Left lung (tissue), 14 donors: ENCODE measurements at regions of chr15 and their contacts with region 1.

Region 1: GRCh38 chr15:26891448-26892181 is 24.8 kb downstream of the GABRA5 start:
- DNase-seq: peak in 3 of 4 donors; percentile 53 to 90 (median 87)
- ATAC-seq: peak; percentile 87
- H3K4me3 ChIP-seq: no peak overlapping the region
- H3K27ac ChIP-seq: no peak overlapping the region
- H3K4me1 ChIP-seq: peaks cover 0 to 4% of the 10 kb centered on the region in 2 donors
- H3K27me3 ChIP-seq: peaks cover 0 to 39% of the 10 kb centered on the region in 2 donors
- CTCF ChIP-seq: peak; percentile 41 to 54

Region 2: GRCh38 chr15:26781816-26782215 is 109.8 kb before region 1 on chr15:
- intact Hi-C with region 1: no loop called
- DNase-seq: peak in 1 of 4 donors; percentile 51
- ATAC-seq: no peak
- H3K4me3 ChIP-seq: no peak overlapping the region
- H3K27ac ChIP-seq: no peak overlapping the region
- H3K4me1 ChIP-seq: no peaks in the 10 kb centered on the region
- H3K27me3 ChIP-seq: peaks cover 0 to 8% of the 10 kb centered on the region in 2 donors
- CTCF ChIP-seq: no peak

Region 3: DNA sequence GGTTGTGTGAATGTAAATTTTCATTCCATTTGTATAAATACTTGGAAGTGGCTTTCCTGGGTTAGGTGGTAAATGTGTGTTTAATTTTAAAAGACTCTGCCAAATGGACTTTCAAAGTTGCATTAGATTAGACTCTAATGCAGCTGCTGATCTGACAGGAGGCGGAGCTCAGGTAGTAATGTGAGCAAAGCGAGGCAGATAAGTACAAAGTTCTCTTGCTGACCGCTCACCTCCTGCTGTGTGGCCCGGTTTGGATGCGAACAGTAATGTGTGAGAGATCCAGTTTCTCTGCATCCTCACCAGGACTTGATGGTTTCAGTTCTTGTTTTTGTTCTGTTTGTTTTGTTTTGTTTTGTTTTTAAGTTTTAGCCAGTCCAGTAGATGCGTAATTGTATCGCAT is 59.7 kb before region 1 on chr15:
- intact Hi-C with region 1: no loop called
- DNase-seq: no peak
- ATAC-seq: no peak
- H3K4me3 ChIP-seq: no peak overlapping the region
- H3K27ac ChIP-seq: no peak overlapping the region
- H3K4me1 ChIP-seq: no peaks in the 10 kb centered on the region
- H3K27me3 ChIP-seq: no peaks in the 10 kb centered on the region
- CTCF ChIP-seq: no peak

Region 4: DNA sequence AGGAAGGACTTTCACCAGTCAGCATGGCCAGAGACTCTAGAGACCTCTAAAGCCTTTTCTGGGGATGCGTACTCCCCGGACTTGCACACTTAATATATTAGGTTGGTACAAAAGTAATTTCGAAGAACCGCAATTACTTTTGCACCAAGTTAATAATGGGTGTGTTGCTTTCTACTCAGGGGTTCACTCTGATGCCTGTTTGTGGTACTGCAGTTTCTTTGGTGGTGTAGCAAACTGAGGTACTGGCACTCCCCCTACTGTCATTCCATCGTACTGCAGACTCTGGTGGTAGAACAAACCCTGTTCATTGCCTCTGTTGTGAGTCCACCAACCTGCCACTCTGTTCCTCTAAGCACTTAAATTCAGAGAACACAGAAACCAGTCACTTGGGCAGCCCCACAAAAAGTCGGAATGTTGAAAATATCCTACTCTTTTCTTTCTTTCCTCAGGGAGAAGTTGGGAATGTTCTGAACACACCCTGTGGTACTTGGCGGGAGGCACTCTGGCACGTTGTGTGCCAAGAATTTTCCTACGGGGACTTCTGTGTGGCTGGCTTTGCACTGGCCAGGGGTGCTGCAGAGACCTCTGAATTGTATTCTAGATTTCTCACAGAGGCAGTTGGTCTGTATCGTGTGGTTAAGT is 125.7 kb after region 1 on chr15:
- intact Hi-C with region 1: loop called in 1 of 2 experiments (anchors 5 kb)
- DNase-seq: peak in 2 of 4 donors; percentile 51 to 83
- ATAC-seq: peak; percentile 93
- H3K4me3 ChIP-seq: no peak overlapping the region
- H3K27ac ChIP-seq: no peak overlapping the region
- H3K4me1 ChIP-seq: no peaks in the 10 kb centered on the region
- H3K27me3 ChIP-seq: no peaks in the 10 kb centered on the region
- CTCF ChIP-seq: peak in 1 of 2 donors; percentile 54

Region 5: GRCh38 chr15:28123408-28124023 is 1231.9 kb after region 1 on chr15:
- intact Hi-C with region 1: loop called in 1 of 2 experiments (anchors 10 kb)
- DNase-seq: peak in 1 of 4 donors; percentile 77
- ATAC-seq: peak; percentile 92
- H3K4me3 ChIP-seq: no peak overlapping the region
- H3K27ac ChIP-seq: no peak overlapping the region
- H3K4me1 ChIP-seq: no peaks in the 10 kb centered on the region
- H3K27me3 ChIP-seq: no peaks in the 10 kb centered on the region
- CTCF ChIP-seq: peak; percentile 63